Activated CD4-positive, alpha-beta memory T cell treated with anti-CD3 and anti-CD28 coated beads for 36 hours (primary cell): ENCODE measurements at regions of chr5 and their contacts with region 1.

Region 1: DNA sequence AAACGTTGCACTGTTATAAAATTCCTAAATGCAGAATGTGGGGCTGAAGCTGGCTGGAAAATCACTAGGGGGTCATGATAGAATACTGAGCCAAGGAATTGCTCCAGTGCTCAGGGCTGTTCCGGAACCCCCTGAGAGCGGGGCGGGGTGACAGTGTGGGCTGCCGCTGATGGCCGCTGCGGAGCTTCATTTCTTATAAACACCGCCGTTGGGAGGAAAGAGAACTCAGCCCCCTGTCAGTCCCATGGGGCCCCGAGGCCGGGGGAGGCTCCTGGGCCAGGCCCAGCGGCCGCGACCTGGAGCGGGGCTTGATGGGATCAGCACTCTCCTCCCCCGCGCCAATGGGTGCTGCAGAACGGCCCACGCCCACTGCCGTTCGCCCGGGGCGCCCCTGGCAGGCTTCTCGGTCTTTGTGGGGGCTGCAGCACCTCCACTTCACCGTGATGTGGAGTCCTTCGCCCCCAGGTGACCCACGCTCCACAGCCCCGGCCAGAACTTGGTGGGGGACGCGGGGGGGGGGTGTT is 5.2 kb upstream of the IRF1 start:
- DNase-seq: peak; percentile 90
- H3K4me3 Mint-ChIP-seq: peak overlapping the region; percentile 89
- H3K27ac Mint-ChIP-seq: peak overlapping the region; percentile 98
- H3K4me1 Mint-ChIP-seq: peaks cover 57% of the 10 kb centered on the region
- H3K27me3 Mint-ChIP-seq: no peaks in the 10 kb centered on the region

Region 2: DNA sequence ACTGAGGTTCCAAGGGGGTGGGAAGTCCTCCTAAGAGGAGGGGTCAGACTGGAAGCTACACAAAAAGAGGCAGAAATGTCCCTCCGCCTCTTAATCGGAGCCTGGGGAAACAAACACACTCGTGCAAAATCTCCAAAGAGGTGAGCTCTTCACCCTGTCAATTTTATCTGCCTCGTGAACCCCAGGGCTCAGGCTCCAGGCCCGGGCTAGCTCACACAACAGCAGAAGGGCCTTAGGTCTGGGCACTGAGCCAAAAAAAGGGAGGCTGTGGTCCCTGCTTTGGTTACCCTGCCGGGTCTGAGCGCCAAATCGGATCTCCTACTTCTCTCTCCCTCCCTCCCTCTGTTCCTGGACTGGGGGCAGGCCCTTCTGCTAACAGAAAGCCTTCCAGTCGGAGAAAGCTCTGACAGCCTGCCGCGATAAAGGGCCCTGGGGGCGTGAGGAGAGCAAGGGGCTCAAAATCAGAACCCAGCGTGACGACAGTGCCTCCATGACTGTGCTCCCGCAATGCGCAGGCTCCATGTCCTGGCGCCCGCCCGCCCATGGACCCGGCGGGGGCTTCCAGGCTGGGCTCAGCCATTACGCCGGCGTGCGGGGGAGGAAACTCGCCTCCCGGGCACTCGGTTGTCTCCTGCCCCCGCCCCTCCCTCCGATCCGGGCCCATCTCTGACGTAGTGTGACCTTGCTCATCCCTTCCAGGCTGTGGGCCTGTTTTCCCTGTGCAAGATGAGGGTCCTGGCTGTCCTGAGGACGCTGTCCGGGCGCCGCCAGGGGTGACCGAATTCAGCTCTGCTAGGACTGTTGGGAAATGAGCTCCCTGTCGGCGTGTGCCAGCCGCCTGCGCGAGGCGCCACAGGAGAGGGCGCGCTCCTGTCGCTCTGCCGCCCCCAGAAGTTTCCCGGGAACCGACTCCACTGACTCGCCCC is 202.4 kb before region 1 on chr5:
- CTCF ChIA-PET with region 1: interaction called, 6 read pairs
- POLR2A ChIA-PET with region 1: interaction called, 6 read pairs
- intact Hi-C with region 1: loop called (anchors 1 kb)
- DNase-seq: peak; percentile 87
- H3K4me3 Mint-ChIP-seq: peak overlapping the region; percentile 90
- H3K27ac Mint-ChIP-seq: peak overlapping the region; percentile 82
- H3K4me1 Mint-ChIP-seq: peaks cover 21% of the 10 kb centered on the region
- H3K27me3 Mint-ChIP-seq: peaks cover 10% of the 10 kb centered on the region

Region 3: DNA sequence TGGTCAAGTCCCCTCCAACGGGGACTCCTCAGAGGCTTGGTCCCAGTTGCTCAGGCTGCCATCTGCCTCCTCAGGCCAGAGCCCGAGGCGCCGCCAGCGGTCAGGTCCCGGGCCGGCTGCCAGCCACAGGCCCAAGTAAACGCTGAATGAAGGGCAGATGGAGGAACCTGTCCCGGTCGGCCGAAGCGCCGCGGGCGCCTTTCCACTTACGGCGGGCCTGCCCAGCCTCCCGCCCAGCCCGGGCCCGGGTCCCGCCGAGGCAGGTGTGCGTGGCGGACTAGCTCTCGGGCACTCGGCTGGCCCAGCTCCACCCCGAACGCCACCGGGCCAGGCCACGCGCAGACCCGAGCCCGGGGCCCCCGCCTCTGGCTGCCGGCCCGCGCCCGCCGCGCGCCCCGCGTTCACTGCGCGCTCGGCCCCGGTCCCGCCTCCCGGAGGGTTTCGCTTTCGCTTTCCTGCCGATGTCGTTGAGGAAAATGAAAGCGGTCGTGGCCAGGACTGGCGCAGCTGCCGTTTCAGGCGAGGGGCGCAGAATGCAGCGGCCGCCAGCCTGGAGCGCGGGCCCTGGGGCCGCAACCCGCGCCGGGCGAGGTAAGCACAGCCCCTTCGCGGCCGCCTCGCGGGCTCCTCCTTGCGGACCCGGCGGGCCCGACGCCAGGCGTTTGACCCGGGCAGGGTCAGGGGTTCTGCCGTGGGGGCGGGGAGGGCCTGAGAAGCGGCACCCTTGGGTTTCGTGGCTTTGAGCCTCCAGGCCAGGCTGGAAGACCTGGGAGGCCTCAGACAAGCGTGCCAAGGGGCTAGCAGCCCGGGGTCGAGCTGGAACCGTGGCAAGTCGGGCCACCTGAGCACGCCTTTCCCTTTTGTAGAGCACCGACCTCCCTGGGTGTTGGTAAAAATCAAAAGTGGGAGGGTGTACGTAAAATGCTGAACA is 85.0 kb before region 1 on chr5:
- CTCF ChIA-PET with region 1: interaction called, 31 read pairs
- POLR2A ChIA-PET with region 1: interaction called, 101 read pairs
- intact Hi-C with region 1: loop called (anchors 1 kb)
- DNase-seq: peak; percentile 90
- H3K4me3 Mint-ChIP-seq: peak overlapping the region; percentile 93
- H3K27ac Mint-ChIP-seq: peak overlapping the region; percentile 96
- H3K4me1 Mint-ChIP-seq: peaks cover 65% of the 10 kb centered on the region
- H3K27me3 Mint-ChIP-seq: no peaks in the 10 kb centered on the region

Region 4: GRCh38 chr5:132426525-132427138 is 69.1 kb before region 1 on chr5:
- CTCF ChIA-PET with region 1: interaction called, 40 read pairs
- POLR2A ChIA-PET with region 1: interaction called, 361 read pairs
- intact Hi-C with region 1: loop called (anchors 1 kb)
- DNase-seq: peak; percentile 91
- H3K4me3 Mint-ChIP-seq: peak overlapping the region; percentile 65
- H3K27ac Mint-ChIP-seq: peak overlapping the region; percentile 98
- H3K4me1 Mint-ChIP-seq: peaks cover 96% of the 10 kb centered on the region
- H3K27me3 Mint-ChIP-seq: no peaks in the 10 kb centered on the region

Region 5: GRCh38 chr5:132473019-132473531 is 22.7 kb before region 1 on chr5:
- CTCF ChIA-PET with region 1: interaction called, 27 read pairs
- POLR2A ChIA-PET with region 1: interaction called, 252 read pairs
- intact Hi-C with region 1: loop called (anchors 1 kb)
- DNase-seq: peak; percentile 90
- H3K4me3 Mint-ChIP-seq: peak overlapping the region; percentile 7
- H3K27ac Mint-ChIP-seq: peak overlapping the region; percentile 91
- H3K4me1 Mint-ChIP-seq: peaks cover 75% of the 10 kb centered on the region
- H3K27me3 Mint-ChIP-seq: no peaks in the 10 kb centered on the region

Region 6: DNA sequence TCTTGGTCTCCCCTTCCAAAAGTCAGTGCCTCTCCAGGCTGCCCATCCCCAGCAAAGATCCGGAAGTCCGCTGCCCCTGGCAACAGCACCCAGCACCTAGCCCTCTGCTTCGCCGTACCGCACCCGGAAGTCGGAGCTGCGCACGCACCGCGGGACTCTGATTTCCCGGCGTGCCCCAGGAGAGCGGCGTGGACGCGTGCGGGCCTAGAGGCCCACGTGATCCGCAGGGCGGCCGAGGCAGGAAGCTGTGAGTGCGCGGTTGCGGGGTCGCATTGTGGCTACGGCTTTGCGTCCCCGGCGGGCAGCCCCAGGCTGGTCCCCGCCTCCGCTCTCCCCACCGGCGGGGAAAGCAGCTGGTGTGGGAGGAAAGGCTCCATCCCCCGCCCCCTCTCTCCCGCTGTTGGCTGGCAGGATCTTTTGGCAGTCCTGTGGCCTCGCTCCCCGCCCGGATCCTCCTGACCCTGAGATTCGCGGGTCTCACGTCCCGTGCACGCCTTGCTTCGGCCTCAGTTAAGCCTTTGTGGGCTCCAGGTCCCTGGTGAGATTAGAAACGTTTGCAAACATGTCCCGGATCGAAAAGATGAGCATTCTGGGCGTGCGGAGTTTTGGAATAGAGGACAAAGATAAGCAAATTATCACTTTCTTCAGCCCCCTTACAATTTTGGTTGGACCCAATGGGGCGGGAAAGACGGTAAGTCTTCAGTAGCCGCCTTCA is 61.2 kb after region 1 on chr5 and contains the start of gene RAD50:
- CTCF ChIA-PET with region 1: interaction called, 3 read pairs
- POLR2A ChIA-PET with region 1: no interaction called
- intact Hi-C with region 1: loop called (anchors 5 kb)
- DNase-seq: peak; percentile 96
- H3K4me3 Mint-ChIP-seq: peak within 1 kb of the TSS; percentile 99
- H3K27ac Mint-ChIP-seq: peak within 1 kb of the TSS; percentile 94
- H3K4me1 Mint-ChIP-seq: peaks cover 19% of the 10 kb centered on the region
- H3K27me3 Mint-ChIP-seq: no peaks in the 10 kb centered on the region
- total RNA-seq, gene RAD50: 44.6 to 47.6 TPM